WTC11 (cell line): ENCODE measurements at regions of chr12 and their contacts with region 1.

Region 1: GRCh38 chr12:53952871-53953734 is 1.6 kb upstream of the HOXC12 start:
- DNase-seq: peak; percentile 81
- ATAC-seq: peak; percentile 21
- H3K4me3 Mint-ChIP-seq: peak overlapping the region; percentile 23
- H3K27ac Mint-ChIP-seq: no peak overlapping the region
- H3K4me1 Mint-ChIP-seq: peaks cover 28% of the 10 kb centered on the region
- H3K27me3 Mint-ChIP-seq: peaks cover 100% of the 10 kb centered on the region
- CTCF ChIP-seq: no peak

Region 2: DNA sequence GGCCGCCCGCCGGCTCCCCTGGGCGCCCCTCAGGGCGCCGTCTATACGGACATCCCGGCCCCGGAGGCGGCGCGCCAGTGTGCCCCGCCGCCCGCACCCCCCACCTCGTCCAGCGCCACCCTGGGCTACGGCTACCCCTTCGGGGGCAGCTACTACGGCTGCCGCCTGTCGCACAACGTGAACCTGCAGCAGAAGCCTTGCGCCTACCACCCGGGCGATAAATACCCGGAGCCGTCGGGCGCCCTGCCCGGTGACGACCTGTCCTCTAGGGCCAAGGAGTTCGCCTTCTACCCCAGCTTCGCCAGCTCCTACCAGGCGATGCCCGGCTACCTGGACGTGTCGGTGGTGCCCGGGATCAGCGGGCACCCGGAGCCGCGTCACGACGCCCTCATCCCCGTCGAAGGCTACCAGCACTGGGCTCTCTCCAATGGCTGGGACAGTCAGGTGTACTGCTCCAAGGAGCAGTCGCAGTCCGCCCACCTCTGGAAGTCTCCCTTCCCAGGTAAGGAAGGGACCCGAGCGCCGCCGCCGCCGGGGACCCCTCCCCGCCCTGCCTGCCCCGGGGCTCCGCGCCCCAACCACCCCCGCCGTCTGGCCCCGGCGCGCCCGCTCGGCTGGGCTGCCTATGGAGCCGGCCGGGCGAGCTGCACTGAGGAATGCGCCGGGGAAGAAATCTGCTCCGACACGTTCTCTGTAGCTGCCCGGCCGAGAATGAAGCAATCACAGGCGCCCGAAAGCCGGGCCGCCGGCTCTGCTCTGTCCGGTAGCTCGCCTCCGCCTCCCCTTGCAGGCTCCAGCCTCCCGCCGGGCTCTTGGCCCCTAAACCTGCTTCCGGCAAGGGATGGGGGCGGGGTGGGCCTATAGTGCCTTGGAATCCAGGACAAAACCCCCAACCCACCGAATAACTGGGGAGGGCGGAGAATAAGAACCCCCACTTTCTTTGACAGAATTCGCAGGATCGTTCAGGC is 13.7 kb before region 1 on chr12:
- CTCF ChIA-PET with region 1: interaction called, 10 read pairs
- POLR2A ChIA-PET with region 1: interaction called, 4 read pairs
- DNase-seq: peak; percentile 71
- ATAC-seq: peak; percentile 17
- H3K4me3 Mint-ChIP-seq: peak overlapping the region; percentile 53
- H3K27ac Mint-ChIP-seq: no peak overlapping the region
- H3K4me1 Mint-ChIP-seq: peaks cover 21% of the 10 kb centered on the region
- H3K27me3 Mint-ChIP-seq: peaks cover 99% of the 10 kb centered on the region
- CTCF ChIP-seq: no peak